ENCODE measurements at regions of chr12 and their contacts with region 1.

Region 1: DNA sequence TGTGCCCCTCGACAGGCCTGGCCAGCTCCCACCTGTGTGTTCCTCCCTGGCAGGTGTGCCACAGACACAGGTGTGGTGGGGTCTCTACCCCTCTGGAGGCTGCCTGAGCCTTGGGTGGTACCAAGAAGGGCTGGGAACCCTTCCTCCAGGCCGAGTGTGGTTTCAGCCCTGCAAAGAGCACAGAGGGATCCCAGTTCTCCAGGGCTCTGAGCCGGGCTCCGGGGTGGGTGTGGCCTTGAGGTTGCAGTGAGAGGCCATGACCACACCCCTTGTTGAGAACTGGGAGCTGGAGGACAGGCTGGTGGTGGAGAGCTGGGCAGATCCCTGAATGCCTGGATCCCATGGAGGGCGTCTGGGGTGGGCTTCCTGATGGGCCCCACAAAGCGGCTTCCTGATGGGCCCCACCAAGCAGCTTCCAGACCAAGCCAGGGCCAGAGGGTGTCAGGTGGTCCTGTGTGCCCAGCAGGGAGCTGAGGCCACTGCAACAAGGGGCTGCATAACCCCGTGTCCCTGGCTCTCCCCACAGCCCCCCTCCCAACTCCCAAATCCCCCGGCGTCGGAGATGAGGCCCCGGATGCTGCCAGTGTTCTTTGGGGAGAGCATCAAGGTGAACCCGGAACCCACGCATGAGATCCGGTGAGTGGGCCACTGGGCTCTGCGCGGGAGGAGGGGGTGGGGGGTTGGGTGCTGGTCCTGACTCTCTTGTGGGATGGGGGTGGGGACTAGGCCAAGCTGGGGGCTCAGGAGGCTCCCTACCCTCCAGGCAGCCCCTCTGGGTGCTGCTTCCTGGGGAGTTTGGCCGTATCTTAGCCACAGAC is 16.6 kb downstream of the RFLNA start:
- DNase-seq: no peak
- ATAC-seq: no peak
- H3K4me3 ChIP-seq: no peak overlapping the region
- H3K27ac ChIP-seq: no peak overlapping the region
- H3K4me1 ChIP-seq: no peaks in the 10 kb centered on the region
- H3K27me3 ChIP-seq: no peaks in the 10 kb centered on the region
- CTCF ChIP-seq: no peak
- POLR2A ChIP-seq: no peak

Region 2: GRCh38 chr12:124044809-124045321 is 266.6 kb before region 1 on chr12:
- in situ Hi-C with region 1: loop called (anchors 5 to 10 kb)
- intact Hi-C with region 1: no loop called
- DNase-seq: no peak
- ATAC-seq: peak; percentile 47 to 75
- H3K4me3 ChIP-seq: no peak overlapping the region
- H3K27ac ChIP-seq: no peak overlapping the region
- H3K4me1 ChIP-seq: peaks cover 0 to 11% of the 10 kb centered on the region in 2 donors
- H3K27me3 ChIP-seq: no peaks in the 10 kb centered on the region
- CTCF ChIP-seq: no peak
- POLR2A ChIP-seq: no peak

Region 3: DNA sequence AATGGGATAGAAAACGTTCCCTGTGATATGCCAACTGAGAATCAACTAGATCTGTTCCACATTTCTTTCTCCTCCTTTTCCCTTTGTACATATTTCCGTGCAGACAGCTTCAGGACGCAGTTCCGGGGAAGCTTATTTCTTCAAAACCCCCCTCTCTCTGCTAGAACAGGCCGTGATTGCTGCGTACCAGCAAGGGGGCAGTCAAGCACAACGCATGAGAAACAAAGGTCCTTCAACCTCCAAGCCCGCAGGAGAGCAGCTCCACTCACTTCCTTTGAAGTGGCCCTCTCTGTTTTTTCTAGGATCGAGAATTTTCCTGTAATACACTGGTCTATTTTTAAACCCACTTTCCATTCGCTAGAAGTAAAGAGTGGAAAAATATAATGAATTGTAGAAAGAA is 257.6 kb before region 1 on chr12:
- in situ Hi-C with region 1: loop called (anchors 5 to 10 kb)
- intact Hi-C with region 1: no loop called
- DNase-seq: peak in 1 of 2 donors; percentile 26
- ATAC-seq: peak; percentile 53 to 69
- H3K4me3 ChIP-seq: no peak overlapping the region
- H3K27ac ChIP-seq: no peak overlapping the region
- H3K4me1 ChIP-seq: no peaks in the 10 kb centered on the region
- H3K27me3 ChIP-seq: no peaks in the 10 kb centered on the region
- CTCF ChIP-seq: peak; percentile 50 to 63 (median 54)
- POLR2A ChIP-seq: no peak